Heart right ventricle (tissue), 16 donors: ENCODE measurements at regions of chrX and their contacts with region 1.

Region 1: DNA sequence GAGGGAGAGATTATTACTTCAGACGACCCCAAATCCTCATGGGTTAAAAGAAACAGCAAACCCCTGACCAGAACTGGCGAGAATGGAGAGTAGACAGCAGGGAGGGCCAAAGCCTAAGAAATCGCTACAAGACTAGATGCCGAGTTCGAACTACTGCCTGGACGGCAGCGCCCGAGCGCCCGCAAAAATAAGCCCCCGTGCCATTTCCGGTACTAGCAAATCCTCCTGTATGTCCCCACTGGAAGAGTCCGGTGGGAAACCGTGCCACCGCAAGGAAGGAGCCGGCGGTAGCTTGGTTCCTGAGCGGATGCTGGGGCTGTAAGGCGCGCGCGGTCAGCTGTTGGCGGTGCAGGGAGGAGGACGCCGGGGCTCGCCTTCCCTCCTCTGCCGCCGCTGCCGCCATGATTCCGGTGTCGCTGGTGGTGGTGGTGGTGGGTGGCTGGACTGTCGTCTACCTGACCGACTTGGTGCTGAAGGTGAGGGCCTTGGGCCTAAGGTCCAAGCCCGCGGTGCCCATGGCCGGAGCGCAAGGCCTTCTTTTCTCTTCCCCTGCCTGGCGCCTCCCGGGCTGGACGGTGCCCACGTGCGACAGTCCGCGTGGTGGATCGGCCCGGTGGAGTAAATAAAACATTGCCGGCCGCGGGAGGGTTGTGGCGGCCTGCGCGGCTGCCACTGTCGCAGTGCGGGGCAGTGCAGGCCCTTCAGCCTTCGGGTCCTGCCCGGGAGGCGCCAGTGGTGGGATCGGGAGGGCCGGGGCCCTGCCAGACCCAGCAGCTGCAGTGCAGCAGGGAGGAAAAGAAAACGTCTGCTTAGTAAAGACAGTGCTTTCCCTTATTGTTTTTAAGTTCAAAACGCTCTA is at the start of gene MBTPS2:
- DNase-seq: peak; percentile 81 to 84
- ATAC-seq: peak; percentile 85 to 97 (median 95)
- H3K4me3 ChIP-seq: peak within 1 kb of the TSS; percentile 26 to 80 (median 72)
- H3K27ac ChIP-seq: peak within 1 kb of the TSS; percentile 39 to 89 (median 86)
- H3K4me1 ChIP-seq: peaks cover 0 to 27% (median 11%) of the 10 kb centered on the region in 9 donors
- H3K27me3 ChIP-seq: peaks cover 0 to 34% (median 0%) of the 10 kb centered on the region in 7 donors
- CTCF ChIP-seq: peak in 2 of 9 donors; percentile 19 to 25
- total RNA-seq, gene MBTPS2: 10.6 to 14.2 (median 12.8) TPM

Region 2: DNA sequence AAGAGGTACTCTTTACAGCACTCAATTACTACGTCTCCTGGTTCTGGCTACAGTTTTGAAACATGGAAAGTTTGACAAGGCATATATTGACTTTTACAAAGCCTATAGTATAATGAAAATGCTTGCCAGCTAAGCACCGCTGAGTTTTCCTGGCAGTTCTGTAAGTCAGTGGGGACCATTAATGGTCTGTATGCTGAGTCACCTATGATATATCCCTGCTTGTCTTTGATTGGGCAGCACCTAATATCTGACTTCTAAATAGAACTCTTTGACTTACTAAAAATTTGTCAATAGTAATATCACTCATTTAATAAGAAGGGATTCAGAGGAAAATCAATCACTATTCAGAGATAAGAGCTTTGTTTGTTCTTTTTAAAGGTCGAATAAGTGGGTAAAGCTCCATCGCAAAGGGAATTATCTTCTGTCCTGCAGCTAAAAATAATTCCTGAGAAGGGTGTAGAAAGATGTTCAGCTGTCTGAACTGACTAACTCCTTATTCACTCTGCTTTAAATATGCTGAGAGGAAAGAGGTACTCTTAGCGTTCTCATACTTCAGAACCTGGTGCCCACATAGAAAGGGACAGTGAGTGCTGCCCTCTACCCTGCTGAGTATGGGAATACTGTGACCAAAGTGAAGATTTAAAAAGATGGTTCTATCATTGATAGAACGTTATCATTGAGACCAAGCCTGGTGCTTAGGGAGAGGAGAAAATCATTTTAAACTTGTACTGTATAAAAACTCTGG is 82.6 kb before region 1 on chrX:
- intact Hi-C with region 1: loop called in 4 of 10 experiments (anchors 5 to 10 kb)
- DNase-seq: no peak
- ATAC-seq: peak; percentile 64 to 90 (median 84)
- H3K4me3 ChIP-seq: peak overlapping the region; percentile 14 to 57 (median 46)
- H3K27ac ChIP-seq: peak overlapping the region; percentile 66 to 89 (median 84)
- H3K4me1 ChIP-seq: no peaks in the 10 kb centered on the region
- H3K27me3 ChIP-seq: peaks cover 0 to 21% (median 0%) of the 10 kb centered on the region in 7 donors
- CTCF ChIP-seq: no peak

Region 3: DNA sequence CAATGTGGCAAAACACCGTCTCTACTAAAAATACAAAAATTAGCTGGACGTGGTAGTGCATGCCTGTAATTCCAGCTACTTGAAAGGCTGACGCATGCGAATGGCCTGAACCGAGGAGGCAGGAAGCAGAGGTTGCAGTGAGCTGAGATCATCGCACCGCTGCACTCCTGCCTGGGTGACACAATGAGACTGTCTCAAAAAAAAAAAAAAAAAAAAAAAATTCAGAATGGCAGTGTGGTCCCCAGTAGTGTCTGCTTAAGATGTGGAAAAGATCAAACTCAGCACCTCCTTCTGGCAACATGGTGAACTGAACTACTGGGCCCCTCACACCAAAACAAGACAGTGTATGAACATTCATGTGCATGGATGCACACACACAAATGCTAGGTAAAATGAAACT is 133.2 kb after region 1 on chrX:
- intact Hi-C with region 1: loop called in 1 of 10 experiments (anchors 10 kb)
- DNase-seq: no peak
- ATAC-seq: peak in 6 of 8 donors; percentile 49 to 88 (median 84)
- H3K4me3 ChIP-seq: no peak overlapping the region
- H3K27ac ChIP-seq: peak overlapping the region in 2 of 10 donors; percentile 11 to 39
- H3K4me1 ChIP-seq: peaks cover 0 to 5% (median 0%) of the 10 kb centered on the region in 9 donors
- H3K27me3 ChIP-seq: no peaks in the 10 kb centered on the region
- CTCF ChIP-seq: no peak